ENCODE measurements at regions of chr9 and their contacts with region 1.

Region 1: DNA sequence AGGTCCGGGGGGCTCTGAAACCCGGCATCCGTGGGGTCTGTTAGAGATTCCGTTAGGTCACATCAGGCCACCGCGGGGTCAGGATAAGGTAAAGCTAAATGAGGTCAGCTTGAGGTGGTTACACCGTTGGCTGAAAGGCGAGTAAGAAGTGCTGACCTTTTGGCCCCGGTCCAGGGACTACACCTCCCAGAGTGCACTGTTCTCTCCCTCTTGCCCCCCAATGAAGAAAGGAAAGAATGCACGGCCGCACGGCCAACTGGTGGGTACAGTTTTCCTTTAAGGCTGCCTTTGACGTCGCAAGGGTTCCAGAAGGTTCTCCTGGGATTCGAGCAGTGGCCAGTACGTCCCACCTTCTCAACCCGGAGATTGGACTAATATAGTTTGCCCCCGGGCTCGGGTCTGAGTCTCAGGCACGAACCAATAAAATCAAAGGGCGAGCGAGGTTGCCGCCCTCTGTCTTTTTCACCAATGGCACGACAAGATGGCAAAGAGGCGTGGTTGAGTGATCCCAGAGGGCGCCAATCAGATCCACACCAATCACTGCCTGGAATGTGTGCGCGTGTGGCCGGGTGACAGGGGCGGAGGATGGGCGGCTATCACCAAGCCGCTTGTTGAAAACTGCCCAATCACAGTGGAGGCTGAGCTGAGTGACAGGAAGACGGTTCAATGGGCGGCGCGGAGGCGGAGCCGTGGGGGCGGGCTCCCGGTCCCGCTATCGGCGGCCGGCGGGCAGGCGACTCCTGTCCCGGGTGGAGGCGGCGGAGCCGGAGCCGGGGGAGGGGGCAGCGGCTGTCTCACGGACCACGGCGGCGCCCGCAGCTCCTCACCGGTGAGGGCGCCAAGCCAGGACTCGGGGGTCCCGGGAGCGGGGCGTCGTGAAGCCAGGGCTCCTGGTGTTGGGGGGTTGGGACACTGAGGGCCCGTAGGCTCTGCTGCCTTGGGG is at the start of gene DNAJB5:
- DNase-seq: peak; percentile 99
- H3K4me3 ChIP-seq: peak within 1 kb of the TSS; percentile 88
- H3K27ac ChIP-seq: peak within 1 kb of the TSS; percentile 96
- H3K4me1 ChIP-seq: peaks cover 57% of the 10 kb centered on the region
- H3K27me3 ChIP-seq: no peaks in the 10 kb centered on the region
- CTCF ChIP-seq: no peak
- total RNA-seq, gene DNAJB5: 70.0 TPM

Region 2: GRCh38 chr9:34899535-34900158 is 89.6 kb before region 1 on chr9:
- intact Hi-C with region 1: loop called (anchors 5 kb)
- DNase-seq: peak; percentile 79
- H3K4me3 ChIP-seq: no peak overlapping the region
- H3K27ac ChIP-seq: no peak overlapping the region
- H3K4me1 ChIP-seq: no peaks in the 10 kb centered on the region
- H3K27me3 ChIP-seq: peaks cover 48% of the 10 kb centered on the region
- CTCF ChIP-seq: peak; percentile 87

Region 3: GRCh38 chr9:35051069-35051967 is 62.0 kb after region 1 on chr9:
- intact Hi-C with region 1: no loop called
- DNase-seq: peak; percentile 36
- H3K4me3 ChIP-seq: no peak overlapping the region
- H3K27ac ChIP-seq: peak overlapping the region; percentile 83
- H3K4me1 ChIP-seq: peaks cover 13% of the 10 kb centered on the region
- H3K27me3 ChIP-seq: no peaks in the 10 kb centered on the region
- CTCF ChIP-seq: peak; percentile 73

Region 4: GRCh38 chr9:35179347-35180287 is 190.3 kb after region 1 on chr9:
- intact Hi-C with region 1: no loop called
- DNase-seq: no peak
- H3K4me3 ChIP-seq: no peak overlapping the region
- H3K27ac ChIP-seq: no peak overlapping the region
- H3K4me1 ChIP-seq: peaks cover 15% of the 10 kb centered on the region
- H3K27me3 ChIP-seq: no peaks in the 10 kb centered on the region
- CTCF ChIP-seq: no peak

Measured in left ventricle myocardium inferior (tissue), 1 donor.